H1 (cell line): ENCODE measurements at regions of chr15 and their contacts with region 1.

Region 1: DNA sequence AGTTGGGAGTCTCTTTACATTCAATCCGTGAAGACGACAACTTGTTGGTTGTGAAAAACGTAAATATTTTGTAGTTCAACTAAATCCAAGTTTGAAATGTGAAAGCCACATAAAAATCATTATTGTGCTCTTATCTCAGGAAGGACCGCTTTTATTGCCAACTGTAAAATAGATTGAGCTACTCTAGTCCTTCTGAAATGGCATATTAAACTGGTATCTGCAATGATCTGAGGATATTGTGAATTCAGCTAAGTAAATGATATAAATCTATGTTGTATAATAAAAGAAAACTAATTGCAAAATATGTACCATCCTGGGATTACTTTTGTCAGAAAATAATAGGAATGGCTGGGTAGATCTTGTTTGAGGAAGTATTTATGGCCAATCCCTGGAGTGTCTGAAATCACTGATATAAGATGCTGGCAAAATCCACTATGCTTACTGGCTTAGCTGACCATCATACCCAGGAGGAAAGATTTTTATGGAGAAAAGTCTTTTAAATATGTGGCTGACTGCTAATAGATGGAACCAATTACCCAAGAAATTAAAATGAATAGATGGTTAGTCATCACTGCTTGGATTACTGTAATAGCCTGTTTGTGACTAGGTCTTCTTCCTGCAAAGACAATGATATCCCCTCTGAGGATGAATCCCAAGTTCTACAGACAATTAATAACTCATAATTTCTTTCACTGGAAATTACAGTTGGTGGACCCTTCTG is 191.8 kb downstream of the SEMA6D start:
- DNase-seq: no peak
- H3K4me3 ChIP-seq: no peak overlapping the region
- H3K27ac ChIP-seq: no peak overlapping the region
- H3K4me1 ChIP-seq: no peaks in the 10 kb centered on the region
- H3K27me3 ChIP-seq: no peaks in the 10 kb centered on the region
- CTCF ChIP-seq: no peak
- EP300 ChIP-seq: no peak
- POLR2A ChIP-seq: no peak
- RAD21 ChIP-seq: no peak

Region 2: DNA sequence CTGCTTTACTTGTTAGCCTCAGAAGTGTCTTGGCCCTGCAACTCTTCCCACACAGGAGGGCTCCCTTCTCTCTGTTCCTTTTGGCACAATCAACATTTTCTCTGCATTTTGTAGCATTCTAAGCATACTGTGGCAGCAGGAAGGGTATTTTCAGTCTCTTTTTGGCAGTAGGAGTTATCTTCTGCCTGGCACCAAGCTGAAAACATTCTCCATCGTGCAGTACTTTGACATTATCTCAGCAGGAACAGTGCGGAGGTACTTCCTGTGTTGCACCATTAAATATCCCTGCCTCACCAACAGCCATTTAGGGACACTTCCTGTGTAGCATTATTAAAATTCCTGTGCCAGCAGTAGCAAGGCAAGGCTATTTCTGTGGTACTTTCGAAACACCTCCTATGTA is 425.1 kb before region 1 on chr15:
- CTCF ChIA-PET with region 1: no interaction called
- POLR2A ChIA-PET with region 1: no interaction called
- DNase-seq: no peak
- H3K4me3 ChIP-seq: no peak overlapping the region
- H3K27ac ChIP-seq: no peak overlapping the region
- H3K4me1 ChIP-seq: no peaks in the 10 kb centered on the region
- H3K27me3 ChIP-seq: no peaks in the 10 kb centered on the region
- CTCF ChIP-seq: no peak
- EP300 ChIP-seq: no peak
- POLR2A ChIP-seq: no peak
- RAD21 ChIP-seq: no peak

Region 3: DNA sequence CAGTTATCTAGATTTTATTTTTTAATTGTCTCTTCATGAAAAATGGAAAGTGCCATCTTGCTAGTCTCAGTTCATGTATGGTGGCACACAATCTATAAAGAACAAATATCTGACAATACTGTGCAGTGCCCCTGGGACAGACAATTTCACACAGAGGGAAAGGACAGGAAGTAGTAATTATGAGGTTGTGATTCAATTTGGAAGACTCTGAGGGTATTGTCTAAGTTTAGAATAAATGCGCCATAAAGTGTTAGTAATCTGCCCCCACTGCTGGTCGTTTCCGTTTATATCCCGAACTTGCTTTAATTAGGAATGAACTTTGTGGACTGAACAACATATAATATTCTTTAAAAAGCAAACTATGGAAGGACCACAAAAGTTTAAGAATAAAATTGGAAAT is 15.3 kb after region 1 on chr15:
- CTCF ChIA-PET with region 1: interaction called, 11 read pairs
- POLR2A ChIA-PET with region 1: no interaction called
- DNase-seq: no peak
- H3K4me3 ChIP-seq: no peak overlapping the region
- H3K27ac ChIP-seq: no peak overlapping the region
- H3K4me1 ChIP-seq: no peaks in the 10 kb centered on the region
- H3K27me3 ChIP-seq: no peaks in the 10 kb centered on the region
- CTCF ChIP-seq: no peak
- EP300 ChIP-seq: no peak
- POLR2A ChIP-seq: no peak
- RAD21 ChIP-seq: no peak